Mammary epithelial cell (primary cell): ENCODE measurements at regions of chr2 and their contacts with region 1.

Region 1: GRCh38 chr2:181104512-181105115 is 124.2 kb downstream of the UBE2E3 start:
- DNase-seq: peak; percentile 48
- H3K4me3 ChIP-seq: no peak overlapping the region
- H3K27ac ChIP-seq: no peak overlapping the region
- H3K4me1 ChIP-seq: peaks cover 17% of the 10 kb centered on the region
- H3K27me3 ChIP-seq: no peaks in the 10 kb centered on the region
- CTCF ChIP-seq: peak; percentile 68 to 82

Region 2: DNA sequence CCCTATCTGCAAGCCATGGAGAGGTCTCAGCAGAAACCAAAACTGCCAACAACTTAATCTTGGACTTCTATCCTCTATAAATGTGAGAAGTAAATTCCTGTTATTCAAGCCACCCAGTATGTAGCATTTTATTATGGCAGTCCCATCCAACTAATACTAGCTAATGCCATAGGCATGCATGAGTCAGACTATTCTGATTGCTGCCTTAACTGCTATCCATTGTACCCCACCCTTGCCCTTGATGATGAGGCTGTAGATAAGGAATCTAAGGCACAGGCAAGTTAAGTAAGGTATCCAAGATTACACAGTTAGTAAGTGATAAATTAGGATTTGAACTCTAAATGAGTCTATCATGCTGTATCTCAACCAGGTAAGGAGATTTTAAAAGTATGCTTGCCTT is 98.8 kb after region 1 on chr2:
- CTCF ChIA-PET with region 1: no interaction called
- dilution Hi-C with region 1: no loop called
- in situ Hi-C with region 1: no loop called
- intact Hi-C with region 1: no loop called
- DNase-seq: peak; percentile 87
- H3K4me3 ChIP-seq: no peak overlapping the region
- H3K27ac ChIP-seq: no peak overlapping the region
- H3K4me1 ChIP-seq: peaks cover 13% of the 10 kb centered on the region
- H3K27me3 ChIP-seq: no peaks in the 10 kb centered on the region
- CTCF ChIP-seq: no peak

Region 3: DNA sequence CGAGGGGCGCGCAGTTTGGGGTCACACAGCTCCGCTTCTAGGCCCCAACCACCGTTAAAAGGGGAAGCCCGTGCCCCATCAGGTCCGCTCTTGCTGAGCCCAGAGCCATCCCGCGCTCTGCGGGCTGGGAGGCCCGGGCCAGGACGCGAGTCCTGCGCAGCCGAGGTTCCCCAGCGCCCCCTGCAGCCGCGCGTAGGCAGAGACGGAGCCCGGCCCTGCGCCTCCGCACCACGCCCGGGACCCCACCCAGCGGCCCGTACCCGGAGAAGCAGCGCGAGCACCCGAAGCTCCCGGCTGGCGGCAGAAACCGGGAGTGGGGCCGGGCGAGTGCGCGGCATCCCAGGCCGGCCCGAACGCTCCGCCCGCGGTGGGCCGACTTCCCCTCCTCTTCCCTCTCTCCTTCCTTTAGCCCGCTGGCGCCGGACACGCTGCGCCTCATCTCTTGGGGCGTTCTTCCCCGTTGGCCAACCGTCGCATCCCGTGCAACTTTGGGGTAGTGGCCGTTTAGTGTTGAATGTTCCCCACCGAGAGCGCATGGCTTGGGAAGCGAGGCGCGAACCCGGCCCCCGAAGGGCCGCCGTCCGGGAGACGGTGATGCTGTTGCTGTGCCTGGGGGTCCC is 352.6 kb after region 1 on chr2 and contains the start of gene ITGA4:
- CTCF ChIA-PET with region 1: interaction called, 3 read pairs
- dilution Hi-C with region 1: loop called (anchors 25 kb)
- in situ Hi-C with region 1: loop called (anchors 10 to 25 kb)
- intact Hi-C with region 1: loop called (anchors 1 kb)
- DNase-seq: peak; percentile 75
- H3K4me3 ChIP-seq: peak within 1 kb of the TSS; percentile 57 to 74 (median 70)
- H3K27ac ChIP-seq: no peak within 1 kb of the TSS
- H3K4me1 ChIP-seq: peaks cover 17% of the 10 kb centered on the region
- H3K27me3 ChIP-seq: no peaks in the 10 kb centered on the region
- CTCF ChIP-seq: peak; percentile 56 to 78
- total RNA-seq, gene ITGA4: 24.9 to 59.7 TPM

Region 4: DNA sequence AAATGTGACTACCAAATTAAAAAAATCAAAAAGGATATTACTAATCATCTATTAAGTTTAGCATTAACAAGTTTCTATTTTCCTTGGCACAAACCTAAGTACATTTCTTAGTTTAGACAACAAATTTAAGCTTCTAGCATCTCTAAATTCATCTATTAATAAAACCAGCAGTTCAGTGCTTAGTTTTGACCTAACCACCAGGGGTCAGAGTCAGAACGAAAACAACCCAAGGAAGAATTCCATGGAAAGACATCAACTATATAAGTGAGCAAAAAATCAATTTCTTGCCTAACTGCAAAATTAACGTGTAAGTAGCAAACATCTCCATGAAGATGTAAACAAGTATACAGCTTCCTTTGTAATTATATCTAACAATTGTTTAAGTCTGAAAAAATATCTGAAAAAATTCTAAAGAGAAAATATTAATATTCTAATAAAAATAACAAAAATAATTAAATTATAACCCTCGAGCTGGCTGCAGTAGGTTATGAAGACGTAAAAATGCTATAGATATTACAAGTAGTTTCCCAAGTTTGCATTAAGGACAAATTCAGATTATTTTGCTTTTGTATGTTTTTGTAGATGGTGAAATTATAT is 468.6 kb after region 1 on chr2:
- CTCF ChIA-PET with region 1: no interaction called
- dilution Hi-C with region 1: no loop called
- in situ Hi-C with region 1: no loop called
- intact Hi-C with region 1: loop called (anchors 5 kb)
- DNase-seq: peak; percentile 12
- H3K4me3 ChIP-seq: no peak overlapping the region
- H3K27ac ChIP-seq: no peak overlapping the region
- H3K4me1 ChIP-seq: peaks cover 4% of the 10 kb centered on the region
- H3K27me3 ChIP-seq: no peaks in the 10 kb centered on the region
- CTCF ChIP-seq: peak; percentile 39 to 65

Region 5: GRCh38 chr2:181891966-181892798 is 787.6 kb after region 1 on chr2:
- CTCF ChIA-PET with region 1: no interaction called
- dilution Hi-C with region 1: no loop called
- in situ Hi-C with region 1: no loop called
- intact Hi-C with region 1: loop called (anchors 10 kb)
- DNase-seq: peak; percentile 82
- H3K4me3 ChIP-seq: peak overlapping the region; percentile 83 to 95 (median 87)
- H3K27ac ChIP-seq: peak overlapping the region; percentile 85
- H3K4me1 ChIP-seq: peaks cover 16% of the 10 kb centered on the region
- H3K27me3 ChIP-seq: no peaks in the 10 kb centered on the region
- CTCF ChIP-seq: peak in 1 of 2 donors; percentile 30